WTC11 (cell line): ENCODE measurements at regions of chr12 and their contacts with region 1.

Region 1: GRCh38 chr12:9364224-9365176 is 156.3 kb upstream of the PZP start:
- DNase-seq: peak; percentile 65
- ATAC-seq: peak; percentile 97
- H3K4me3 Mint-ChIP-seq: peak overlapping the region; percentile 50
- H3K27ac Mint-ChIP-seq: peak overlapping the region; percentile 98
- H3K4me1 Mint-ChIP-seq: peaks cover 49% of the 10 kb centered on the region
- H3K27me3 Mint-ChIP-seq: peaks cover 2% of the 10 kb centered on the region; the same call in 1 of the 2 replicates
- CTCF ChIP-seq: no peak

Region 2: GRCh38 chr12:9378430-9378835 is 13.9 kb after region 1 on chr12:
- CTCF ChIA-PET with region 1: interaction called, 18 read pairs
- POLR2A ChIA-PET with region 1: no interaction called
- DNase-seq: peak; percentile 41
- ATAC-seq: peak; percentile 98
- H3K4me3 Mint-ChIP-seq: no peak overlapping the region
- H3K27ac Mint-ChIP-seq: no peak overlapping the region
- H3K4me1 Mint-ChIP-seq: peaks cover 6% of the 10 kb centered on the region; the same call in 1 of the 2 replicates
- H3K27me3 Mint-ChIP-seq: no peaks in the 10 kb centered on the region
- CTCF ChIP-seq: no peak

Region 3: DNA sequence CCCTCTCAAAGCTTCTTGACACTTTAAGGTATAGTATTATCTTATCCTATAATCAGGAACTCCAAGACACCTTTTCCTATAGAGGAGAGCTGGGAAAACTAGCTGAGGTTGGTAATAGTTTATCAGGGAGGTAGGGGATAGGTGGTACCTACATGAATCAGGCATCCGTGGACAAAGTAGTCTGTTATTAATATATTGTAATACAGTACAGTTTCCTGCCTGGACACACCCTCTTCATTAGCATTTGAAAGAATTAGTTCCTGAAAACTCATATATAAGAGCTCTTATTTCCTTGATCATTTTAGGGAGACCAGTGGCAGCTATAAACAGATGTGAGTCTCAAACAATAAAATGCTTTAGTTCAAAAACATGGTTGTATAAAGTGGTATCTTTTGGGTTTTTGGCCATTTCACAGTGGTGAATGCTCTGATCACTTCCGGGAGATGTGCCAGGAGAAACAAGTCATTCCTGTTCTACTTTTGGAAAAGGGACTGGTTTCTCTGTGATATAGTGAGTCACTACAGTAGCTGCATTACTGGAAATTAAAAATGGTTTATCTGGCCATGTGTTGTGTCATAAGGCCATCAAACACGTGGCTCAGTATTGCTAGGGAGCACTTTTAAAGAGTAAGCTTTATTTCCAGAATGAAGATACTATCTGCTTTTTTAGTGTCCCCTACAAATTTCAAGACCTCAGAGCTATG is 145.1 kb after region 1 on chr12:
- CTCF ChIA-PET with region 1: no interaction called
- POLR2A ChIA-PET with region 1: no interaction called
- DNase-seq: no peak
- ATAC-seq: no peak
- H3K4me3 Mint-ChIP-seq: no peak overlapping the region
- H3K27ac Mint-ChIP-seq: no peak overlapping the region
- H3K4me1 Mint-ChIP-seq: peaks cover 2% of the 10 kb centered on the region; the same call in 1 of the 2 replicates
- H3K27me3 Mint-ChIP-seq: no peaks in the 10 kb centered on the region
- CTCF ChIP-seq: no peak